ENCODE measurements at regions of chr1 and their contacts with region 1.

Region 1: DNA sequence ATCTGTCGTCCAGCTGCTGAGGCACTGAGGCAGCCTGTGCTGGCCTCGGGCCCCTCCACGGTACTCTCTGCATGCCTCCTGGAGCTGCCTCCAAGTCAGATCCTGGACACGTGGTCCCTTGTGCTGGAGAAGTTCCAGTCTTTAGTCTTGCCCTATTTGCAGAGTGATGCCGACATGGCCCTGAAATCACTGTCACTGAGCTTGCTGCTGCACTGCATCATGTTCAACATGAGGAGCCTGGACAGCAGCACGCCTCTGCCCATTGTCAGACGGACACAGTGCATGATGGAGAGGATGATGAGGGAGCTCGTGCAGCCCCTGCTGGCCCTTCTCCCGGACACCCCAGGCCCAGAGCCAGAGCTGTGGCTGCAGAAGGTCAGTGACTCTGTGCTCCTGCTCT is 10.0 kb downstream of the URB2 start:
- DNase-seq: no peak
- H3K4me3 Mint-ChIP-seq: no peak overlapping the region
- H3K27ac Mint-ChIP-seq: no peak overlapping the region
- H3K4me1 Mint-ChIP-seq: peaks cover 3% of the 10 kb centered on the region
- H3K27me3 Mint-ChIP-seq: no peaks in the 10 kb centered on the region
- CTCF ChIP-seq: no peak

Region 2: DNA sequence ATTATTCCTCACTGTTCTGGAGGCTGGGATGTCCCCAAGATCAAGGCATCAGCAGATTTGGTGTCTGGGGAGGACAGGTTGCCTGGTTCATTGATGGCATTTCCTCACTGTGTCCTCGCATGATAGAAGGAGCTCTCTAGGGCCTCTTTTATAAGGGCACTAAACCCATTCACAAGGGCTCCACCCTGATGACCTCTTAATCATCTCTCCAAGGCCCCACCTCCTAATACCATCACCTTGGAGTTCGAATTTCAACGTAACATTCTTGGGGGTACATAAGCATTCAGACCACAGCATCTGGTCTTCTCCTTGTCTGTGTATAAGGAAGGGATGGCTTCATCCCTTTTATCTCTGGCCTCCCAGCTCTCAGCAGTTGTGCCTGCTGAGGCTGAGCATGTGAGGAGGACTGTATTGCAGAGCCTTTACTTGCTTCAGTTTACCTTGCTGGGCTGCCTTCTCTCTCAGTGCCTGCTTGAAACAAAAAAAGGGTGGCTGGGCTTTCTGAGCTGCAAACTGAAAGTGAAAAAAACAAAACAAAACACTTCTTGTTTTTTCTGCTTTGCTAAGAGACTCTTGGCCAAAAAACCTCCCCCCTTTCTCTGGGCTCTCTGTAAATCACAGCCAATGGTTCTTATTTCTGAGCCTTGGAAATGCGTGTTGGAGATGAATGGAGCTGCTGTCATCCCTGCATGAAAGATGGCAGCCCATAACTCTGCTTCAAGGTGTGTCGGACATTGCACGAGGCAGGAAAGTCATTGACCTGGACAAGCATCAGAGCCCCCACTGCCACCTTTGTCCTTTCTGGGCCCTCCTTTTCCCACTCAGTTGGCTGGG is 824.9 kb before region 1 on chr1:
- CTCF ChIA-PET with region 1: no interaction called
- POLR2A ChIA-PET with region 1: no interaction called
- intact Hi-C with region 1: no loop called
- DNase-seq: no peak
- H3K4me3 Mint-ChIP-seq: no peak overlapping the region
- H3K27ac Mint-ChIP-seq: no peak overlapping the region
- H3K4me1 Mint-ChIP-seq: peaks cover 14% of the 10 kb centered on the region
- H3K27me3 Mint-ChIP-seq: peaks cover 14% of the 10 kb centered on the region
- CTCF ChIP-seq: no peak

Region 3: DNA sequence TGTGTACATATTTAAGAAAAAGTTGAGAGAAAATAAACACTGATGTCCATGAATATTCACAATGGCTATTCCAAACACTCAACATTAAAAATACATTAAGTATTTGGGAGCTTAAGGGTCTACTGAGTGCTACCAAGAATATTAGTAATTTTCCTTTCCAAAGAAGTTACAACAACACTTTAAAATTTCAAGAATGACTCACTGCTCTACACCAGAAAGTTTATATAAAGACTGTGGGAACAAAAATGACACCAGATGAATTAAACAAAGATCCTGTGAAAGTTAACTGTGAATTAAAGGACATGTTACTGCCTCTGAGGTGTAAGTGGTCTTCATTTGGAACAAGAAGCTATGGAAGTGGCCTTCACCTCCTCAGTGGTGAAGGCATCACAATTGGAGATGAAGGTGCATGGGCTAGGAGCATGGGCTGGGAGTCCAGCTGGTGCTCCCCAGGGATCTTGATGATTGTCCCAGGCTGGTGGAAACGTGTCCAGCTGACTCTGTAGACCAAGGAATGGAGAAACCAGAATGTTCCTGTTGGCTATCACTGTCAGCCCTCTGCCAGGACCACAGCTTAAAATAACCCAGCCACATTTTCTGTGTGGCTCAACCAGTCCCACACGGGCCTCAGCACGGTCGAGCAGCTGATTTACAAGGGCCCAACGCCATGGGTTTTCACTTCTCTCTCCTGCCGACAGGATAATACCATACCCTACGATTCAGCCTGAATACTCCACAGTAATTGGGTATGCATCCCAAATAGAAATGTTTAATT is 38.9 kb before region 1 on chr1:
- CTCF ChIA-PET with region 1: no interaction called
- POLR2A ChIA-PET with region 1: no interaction called
- intact Hi-C with region 1: no loop called
- DNase-seq: peak; percentile 34
- H3K4me3 Mint-ChIP-seq: no peak overlapping the region
- H3K27ac Mint-ChIP-seq: peak overlapping the region; percentile 57
- H3K4me1 Mint-ChIP-seq: peaks cover 30% of the 10 kb centered on the region
- H3K27me3 Mint-ChIP-seq: no peaks in the 10 kb centered on the region
- CTCF ChIP-seq: no peak

Region 4: DNA sequence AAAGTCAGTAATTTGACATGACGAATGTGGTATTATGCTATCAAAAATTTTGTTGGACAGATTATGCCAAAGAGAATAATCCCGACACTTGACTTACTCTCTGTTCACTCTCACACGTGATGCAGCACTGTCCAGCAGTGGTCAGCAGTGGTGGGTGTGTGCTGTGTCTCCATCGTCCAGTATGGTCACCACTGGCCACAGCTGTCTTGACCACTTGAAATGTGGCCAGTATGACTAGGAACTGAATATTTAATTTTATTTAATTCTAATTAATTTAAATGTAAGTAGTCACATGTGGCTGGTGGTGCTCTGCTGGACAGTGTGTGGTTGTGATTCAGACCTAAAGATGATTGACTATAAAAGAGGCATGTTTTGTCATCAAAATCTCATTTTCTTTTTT is 14.0 kb after region 1 on chr1:
- CTCF ChIA-PET with region 1: interaction called, 10 read pairs
- POLR2A ChIA-PET with region 1: interaction called, 3 read pairs
- intact Hi-C with region 1: no loop called
- DNase-seq: no peak
- H3K4me3 Mint-ChIP-seq: no peak overlapping the region
- H3K27ac Mint-ChIP-seq: no peak overlapping the region
- H3K4me1 Mint-ChIP-seq: no peaks in the 10 kb centered on the region
- H3K27me3 Mint-ChIP-seq: no peaks in the 10 kb centered on the region
- CTCF ChIP-seq: no peak